ENCODE measurements at regions of chr2 and their contacts with region 1.

Region 1: DNA sequence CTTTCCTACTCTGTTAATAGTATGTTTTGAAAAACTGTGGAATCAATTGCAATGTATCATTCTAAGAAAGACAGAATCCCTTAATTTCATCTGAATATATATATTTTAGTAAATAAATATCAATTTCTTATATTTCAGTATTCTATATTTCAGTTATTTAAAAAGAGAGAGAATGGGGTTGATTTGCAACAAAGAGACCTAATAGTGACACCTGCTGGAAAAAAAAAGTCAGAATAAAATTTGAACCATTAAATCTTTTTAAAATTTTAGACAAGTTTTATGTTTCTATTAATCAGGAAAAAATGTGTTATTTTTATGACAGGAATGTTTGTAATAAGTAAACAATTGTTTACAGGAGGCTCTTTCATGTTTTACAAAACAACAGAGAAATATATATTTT is 20.7 kb upstream of the CCNT2 start:
- DNase-seq: no peak
- ATAC-seq: no peak
- H3K4me3 ChIP-seq: no peak overlapping the region
- H3K27ac ChIP-seq: no peak overlapping the region
- H3K4me1 ChIP-seq: no peaks in the 10 kb centered on the region
- H3K27me3 ChIP-seq: peaks cover 12% of the 10 kb centered on the region
- CTCF ChIP-seq: no peak

Region 2: GRCh38 chr2:134460583-134460998 is 437.3 kb before region 1 on chr2:
- CTCF ChIA-PET with region 1: no interaction called
- POLR2A ChIA-PET with region 1: no interaction called
- in situ Hi-C with region 1: no loop called
- intact Hi-C with region 1: loop called (anchors 5 kb)
- DNase-seq: peak; percentile 30
- ATAC-seq: peak; percentile 95
- H3K4me3 ChIP-seq: no peak overlapping the region
- H3K27ac ChIP-seq: no peak overlapping the region
- H3K4me1 ChIP-seq: no peaks in the 10 kb centered on the region
- H3K27me3 ChIP-seq: no peaks in the 10 kb centered on the region
- CTCF ChIP-seq: peak; percentile 89

Region 3: GRCh38 chr2:134782792-134783191 is 115.1 kb before region 1 on chr2:
- CTCF ChIA-PET with region 1: no interaction called
- POLR2A ChIA-PET with region 1: no interaction called
- in situ Hi-C with region 1: no loop called
- intact Hi-C with region 1: loop called (anchors 2 kb)
- DNase-seq: no peak
- ATAC-seq: peak; percentile 72
- H3K4me3 ChIP-seq: no peak overlapping the region
- H3K27ac ChIP-seq: no peak overlapping the region
- H3K4me1 ChIP-seq: no peaks in the 10 kb centered on the region
- H3K27me3 ChIP-seq: peaks cover 10% of the 10 kb centered on the region
- CTCF ChIP-seq: peak; percentile 65

Measured in Panc1 (cell line).